ENCODE measurements at regions of chrX and their contacts with region 1.

Region 1: DNA sequence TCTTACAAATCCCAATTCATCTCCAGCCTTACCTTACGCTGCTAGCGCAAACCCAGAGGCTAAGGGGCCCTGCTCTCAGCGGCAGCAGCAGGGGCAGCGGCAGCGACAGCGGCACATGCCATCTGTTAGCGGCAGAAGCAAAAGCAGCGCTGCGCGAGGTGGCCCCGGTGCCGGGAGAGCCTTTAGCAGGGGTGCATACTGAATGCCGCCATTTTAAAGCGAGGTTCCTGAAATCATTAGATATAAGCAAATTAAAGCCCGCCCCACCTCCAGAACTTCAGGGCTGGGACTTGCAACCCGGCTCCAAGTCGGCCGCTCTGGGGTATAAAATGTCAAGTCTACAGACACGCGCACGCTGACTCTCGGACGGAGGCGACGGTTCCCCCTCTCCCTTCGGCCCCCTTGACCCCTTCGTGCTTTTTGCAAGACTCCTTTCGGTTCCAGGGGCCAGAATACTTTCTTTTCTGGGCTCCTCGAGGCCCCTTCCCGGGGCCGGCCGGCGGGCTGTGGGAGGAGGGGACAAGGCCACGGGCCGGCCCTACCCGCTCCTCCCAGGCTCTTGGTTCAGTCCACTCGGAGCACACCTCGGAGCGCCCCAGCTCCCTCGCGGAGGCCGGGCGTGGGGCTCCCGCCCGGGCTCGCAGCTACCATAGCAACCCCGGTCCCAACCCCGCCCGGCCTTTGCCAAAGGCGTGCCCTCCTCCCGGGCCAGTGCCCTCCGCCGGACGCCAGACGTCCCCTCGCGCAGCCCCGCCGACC is at the start of gene MBNL3:
- DNase-seq: peak; percentile 66
- ATAC-seq: peak; percentile 92
- total RNA-seq, gene MBNL3: 22.6 TPM

Region 2: GRCh38 chrX:132470831-132471230 is 18.2 kb before region 1 on chrX:
- intact Hi-C with region 1: loop called (anchors 2 kb)
- DNase-seq: no peak
- ATAC-seq: no peak